ENCODE measurements at regions of chr2 and their contacts with region 1.

Region 1: DNA sequence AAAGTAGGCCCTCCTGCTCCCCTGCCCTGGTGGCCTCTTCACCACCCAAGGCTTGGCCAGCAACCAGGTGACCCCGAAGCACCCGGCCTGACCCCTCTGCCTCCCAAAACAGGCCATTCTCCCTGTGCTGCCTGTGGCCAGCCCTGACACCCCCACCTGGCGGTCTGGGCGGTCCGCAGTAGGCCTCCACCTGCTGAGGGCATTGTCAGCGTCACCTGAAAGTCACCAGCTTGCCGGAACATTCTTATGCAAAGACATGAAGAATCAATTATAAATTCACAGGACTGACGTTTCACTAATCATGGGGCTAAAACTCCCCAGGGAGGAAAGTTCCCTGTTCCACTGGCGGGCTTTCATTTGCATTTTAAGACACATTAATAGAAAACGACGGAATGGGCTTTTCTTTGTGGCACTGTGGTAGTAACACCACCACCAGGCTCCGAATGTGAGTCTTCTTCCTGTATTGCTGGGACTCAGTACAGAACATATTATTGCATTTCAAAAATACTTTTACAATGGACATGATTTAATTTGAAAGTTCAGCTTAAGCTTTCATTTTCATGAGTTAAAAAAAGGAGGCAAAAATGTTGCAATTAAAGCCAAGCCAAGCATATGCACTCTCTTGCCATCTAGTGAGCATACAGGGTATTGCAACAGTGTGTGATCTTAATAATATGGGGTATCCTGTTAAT is 57.4 kb downstream of the ADI1 start:
- DNase-seq: peak; percentile 68
- ATAC-seq: peak; percentile 85
- H3K4me3 ChIP-seq: peak overlapping the region; percentile 50; the same call in 1 of the 2 replicates
- H3K27ac ChIP-seq: peak overlapping the region; percentile 76
- H3K4me1 ChIP-seq: peaks cover 12% of the 10 kb centered on the region
- H3K27me3 ChIP-seq: no peaks in the 10 kb centered on the region
- CTCF ChIP-seq: peak; percentile 82 to 94 (median 89)
- EP300 ChIP-seq: no peak; a peak in 1 of 4 replicates
- POLR2A ChIP-seq: no peak
- RAD21 ChIP-seq: peak; percentile 91

Region 2: GRCh38 chr2:2101924-2102323 is 1360.0 kb before region 1 on chr2:
- CTCF ChIA-PET with region 1: no interaction called
- POLR2A ChIA-PET with region 1: no interaction called
- RAD21 ChIA-PET with region 1: no interaction called
- SMC1A ChIA-PET with region 1: no interaction called
- in situ Hi-C with region 1: loop called (anchors 25 kb)
- intact Hi-C with region 1: no loop called
- DNase-seq: no peak
- ATAC-seq: no peak
- H3K4me3 ChIP-seq: no peak overlapping the region
- H3K27ac ChIP-seq: no peak overlapping the region
- H3K4me1 ChIP-seq: no peaks in the 10 kb centered on the region
- H3K27me3 ChIP-seq: no peaks in the 10 kb centered on the region
- CTCF ChIP-seq: peak; percentile 5 to 26 (median 17); a peak in 4 of 6 replicates
- EP300 ChIP-seq: no peak
- POLR2A ChIP-seq: no peak
- RAD21 ChIP-seq: no peak

Region 3: GRCh38 chr2:3423492-3424175 is 38.3 kb before region 1 on chr2:
- CTCF ChIA-PET with region 1: interaction called, 44 read pairs
- POLR2A ChIA-PET with region 1: no interaction called
- RAD21 ChIA-PET with region 1: interaction called, 21 read pairs
- SMC1A ChIA-PET with region 1: interaction called, 28 read pairs
- in situ Hi-C with region 1: no loop called
- intact Hi-C with region 1: loop called (anchors 1 kb)
- DNase-seq: peak; percentile 8
- ATAC-seq: peak; percentile 89
- H3K4me3 ChIP-seq: no peak overlapping the region
- H3K27ac ChIP-seq: no peak overlapping the region
- H3K4me1 ChIP-seq: peaks cover 12% of the 10 kb centered on the region
- H3K27me3 ChIP-seq: no peaks in the 10 kb centered on the region
- CTCF ChIP-seq: peak; percentile 77 to 99 (median 98)
- EP300 ChIP-seq: no peak
- POLR2A ChIP-seq: no peak
- RAD21 ChIP-seq: peak; percentile 53

Region 4: DNA sequence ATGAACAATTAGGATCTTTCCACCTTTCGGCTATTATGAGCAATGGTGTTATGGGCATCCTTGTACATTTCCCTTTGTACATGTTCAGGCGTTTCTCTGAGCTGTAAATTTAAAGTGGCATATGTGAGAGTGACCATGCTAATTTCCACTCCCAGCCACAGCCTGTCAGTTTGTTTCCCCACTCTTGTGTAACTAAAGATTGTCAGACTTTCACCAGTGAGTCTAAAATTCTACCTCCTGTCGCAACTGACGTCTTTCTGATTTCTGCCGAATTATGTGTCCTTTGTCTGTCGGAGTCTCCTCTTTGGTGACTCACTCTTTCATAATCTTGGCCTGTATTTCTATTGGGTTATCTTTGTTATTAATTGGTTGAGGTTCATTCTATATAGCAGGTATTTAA is 31.8 kb before region 1 on chr2:
- CTCF ChIA-PET with region 1: interaction called, 11 read pairs
- POLR2A ChIA-PET with region 1: no interaction called
- RAD21 ChIA-PET with region 1: no interaction called
- SMC1A ChIA-PET with region 1: interaction called, 4 read pairs
- in situ Hi-C with region 1: no loop called
- intact Hi-C with region 1: no loop called
- DNase-seq: no peak
- ATAC-seq: no peak
- H3K4me3 ChIP-seq: no peak overlapping the region
- H3K27ac ChIP-seq: no peak overlapping the region
- H3K4me1 ChIP-seq: peaks cover 7% of the 10 kb centered on the region; the same call in 1 of the 2 replicates
- H3K27me3 ChIP-seq: no peaks in the 10 kb centered on the region
- CTCF ChIP-seq: no peak
- EP300 ChIP-seq: no peak
- POLR2A ChIP-seq: no peak
- RAD21 ChIP-seq: no peak

Region 5: DNA sequence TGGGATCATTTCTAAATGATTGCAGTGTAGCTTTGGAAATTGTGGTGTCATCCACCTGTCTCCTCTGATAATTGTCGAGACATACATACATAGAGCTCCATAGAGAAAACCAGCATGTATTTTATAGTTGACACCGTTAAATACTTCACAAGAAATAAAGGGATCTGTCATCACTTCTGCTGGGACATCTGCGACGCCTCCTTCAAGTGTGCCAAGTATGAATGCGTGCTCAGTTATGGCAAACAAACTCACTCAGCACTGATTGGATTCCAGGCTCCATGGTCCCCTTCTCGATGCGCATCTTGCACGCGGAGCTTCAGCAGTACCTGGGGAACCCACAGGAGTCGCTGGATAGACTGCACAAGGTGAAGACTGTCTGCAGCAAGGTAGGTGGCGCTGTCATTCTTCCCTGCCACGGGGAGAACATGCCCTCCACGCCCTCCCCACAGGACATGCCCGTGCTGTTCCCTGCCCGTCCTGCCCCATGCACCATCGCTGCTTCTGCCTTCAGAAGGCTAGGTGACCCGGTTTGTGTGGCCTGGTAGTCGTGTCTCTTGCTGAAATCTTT is 18.4 kb before region 1 on chr2:
- CTCF ChIA-PET with region 1: interaction called, 28 read pairs
- POLR2A ChIA-PET with region 1: no interaction called
- RAD21 ChIA-PET with region 1: interaction called, 10 read pairs
- SMC1A ChIA-PET with region 1: interaction called, 4 read pairs
- in situ Hi-C with region 1: no loop called
- intact Hi-C with region 1: no loop called
- DNase-seq: no peak
- ATAC-seq: no peak
- H3K4me3 ChIP-seq: no peak overlapping the region
- H3K27ac ChIP-seq: no peak overlapping the region
- H3K4me1 ChIP-seq: no peaks in the 10 kb centered on the region
- H3K27me3 ChIP-seq: no peaks in the 10 kb centered on the region
- CTCF ChIP-seq: no peak; a peak in 1 of 6 replicates
- EP300 ChIP-seq: no peak
- POLR2A ChIP-seq: no peak
- RAD21 ChIP-seq: no peak

Region 6: GRCh38 chr2:3585261-3586109 is 123.5 kb after region 1 on chr2:
- CTCF ChIA-PET with region 1: no interaction called
- POLR2A ChIA-PET with region 1: no interaction called
- RAD21 ChIA-PET with region 1: no interaction called
- SMC1A ChIA-PET with region 1: no interaction called
- in situ Hi-C with region 1: no loop called
- intact Hi-C with region 1: no loop called
- DNase-seq: no peak
- ATAC-seq: no peak
- H3K4me3 ChIP-seq: no peak overlapping the region
- H3K27ac ChIP-seq: no peak overlapping the region
- H3K4me1 ChIP-seq: no peaks in the 10 kb centered on the region; the same call in 1 of the 2 replicates
- H3K27me3 ChIP-seq: no peaks in the 10 kb centered on the region
- CTCF ChIP-seq: no peak
- EP300 ChIP-seq: no peak
- POLR2A ChIP-seq: no peak
- RAD21 ChIP-seq: no peak

Region 7: DNA sequence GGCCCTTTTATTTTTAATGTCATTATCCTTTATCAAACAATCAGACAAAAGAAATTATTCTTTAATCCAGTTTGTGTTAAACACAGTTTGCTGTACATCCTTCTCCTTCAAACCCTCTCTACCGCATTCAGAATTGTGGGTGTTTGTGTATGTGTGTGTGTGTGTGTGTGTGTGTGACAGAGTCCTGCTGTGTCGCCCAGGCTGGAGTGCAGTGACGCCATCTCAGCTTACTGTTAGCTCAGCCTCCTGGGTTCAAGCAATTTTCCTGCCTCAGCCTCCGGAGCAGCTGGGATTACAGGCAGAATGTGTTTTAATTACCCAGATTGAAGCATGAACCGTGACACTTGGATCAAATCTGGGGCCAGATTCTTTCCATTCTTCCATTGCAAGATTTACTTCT is 965.1 kb after region 1 on chr2:
- CTCF ChIA-PET with region 1: no interaction called
- POLR2A ChIA-PET with region 1: no interaction called
- RAD21 ChIA-PET with region 1: no interaction called
- SMC1A ChIA-PET with region 1: no interaction called
- in situ Hi-C with region 1: no loop called
- intact Hi-C with region 1: no loop called
- DNase-seq: no peak
- ATAC-seq: no peak
- H3K4me3 ChIP-seq: no peak overlapping the region
- H3K27ac ChIP-seq: no peak overlapping the region
- H3K4me1 ChIP-seq: no peaks in the 10 kb centered on the region
- H3K27me3 ChIP-seq: no peaks in the 10 kb centered on the region
- CTCF ChIP-seq: no peak
- EP300 ChIP-seq: no peak
- POLR2A ChIP-seq: no peak
- RAD21 ChIP-seq: no peak